Activated B cell treated with CpG ODN at 0.5 μM for 24 hours (primary cell): ENCODE measurements at regions of chr6 and their contacts with region 1.

Region 1: DNA sequence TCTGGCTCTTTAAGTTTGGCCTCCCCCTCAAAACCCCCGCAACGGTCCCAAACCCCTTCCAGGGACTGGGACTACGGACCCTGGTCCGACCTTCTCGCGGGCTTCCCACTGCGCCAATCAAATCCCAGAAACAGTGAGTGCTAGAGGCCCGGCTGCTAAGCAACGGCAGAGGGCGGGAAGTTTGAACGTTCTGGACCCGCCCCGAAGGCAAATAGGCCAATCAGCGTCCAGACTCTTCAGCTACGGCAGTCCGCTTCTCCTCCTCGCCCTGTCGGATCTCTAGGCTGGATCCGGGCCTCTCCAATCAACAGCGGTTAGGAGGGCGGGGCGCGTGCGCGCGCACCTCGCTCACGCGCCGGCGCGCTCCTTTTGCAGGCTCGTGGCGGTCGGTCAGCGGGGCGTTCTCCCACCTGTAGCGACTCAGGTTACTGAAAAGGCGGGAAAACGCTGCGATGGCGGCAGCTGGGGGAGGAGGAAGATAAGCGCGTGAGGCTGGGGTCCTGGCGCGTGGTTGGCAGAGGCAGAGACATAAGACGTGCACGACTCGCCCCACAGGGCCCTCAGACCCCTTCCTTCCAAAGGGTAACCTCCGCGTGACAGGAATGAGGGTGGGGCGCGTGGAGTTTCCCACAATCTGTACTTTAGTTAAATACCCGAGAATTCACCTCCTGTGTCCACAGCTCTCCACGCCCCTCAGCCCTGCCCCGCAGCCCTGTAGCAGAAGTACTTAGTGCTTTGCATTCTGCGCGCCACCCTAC is at the start of gene MSH5:
- DNase-seq: peak; percentile 90
- ATAC-seq: peak; percentile 80
- H3K4me3 Mint-ChIP-seq: peak within 1 kb of the TSS; percentile 93
- H3K27ac Mint-ChIP-seq: peak within 1 kb of the TSS; percentile 94
- H3K4me1 Mint-ChIP-seq: peaks cover 51% of the 10 kb centered on the region
- H3K27me3 Mint-ChIP-seq: no peaks in the 10 kb centered on the region
- CTCF ChIP-seq: no peak
- total RNA-seq, gene MSH5: 35.4 and 47.3 TPM in 2 replicates

Region 2: DNA sequence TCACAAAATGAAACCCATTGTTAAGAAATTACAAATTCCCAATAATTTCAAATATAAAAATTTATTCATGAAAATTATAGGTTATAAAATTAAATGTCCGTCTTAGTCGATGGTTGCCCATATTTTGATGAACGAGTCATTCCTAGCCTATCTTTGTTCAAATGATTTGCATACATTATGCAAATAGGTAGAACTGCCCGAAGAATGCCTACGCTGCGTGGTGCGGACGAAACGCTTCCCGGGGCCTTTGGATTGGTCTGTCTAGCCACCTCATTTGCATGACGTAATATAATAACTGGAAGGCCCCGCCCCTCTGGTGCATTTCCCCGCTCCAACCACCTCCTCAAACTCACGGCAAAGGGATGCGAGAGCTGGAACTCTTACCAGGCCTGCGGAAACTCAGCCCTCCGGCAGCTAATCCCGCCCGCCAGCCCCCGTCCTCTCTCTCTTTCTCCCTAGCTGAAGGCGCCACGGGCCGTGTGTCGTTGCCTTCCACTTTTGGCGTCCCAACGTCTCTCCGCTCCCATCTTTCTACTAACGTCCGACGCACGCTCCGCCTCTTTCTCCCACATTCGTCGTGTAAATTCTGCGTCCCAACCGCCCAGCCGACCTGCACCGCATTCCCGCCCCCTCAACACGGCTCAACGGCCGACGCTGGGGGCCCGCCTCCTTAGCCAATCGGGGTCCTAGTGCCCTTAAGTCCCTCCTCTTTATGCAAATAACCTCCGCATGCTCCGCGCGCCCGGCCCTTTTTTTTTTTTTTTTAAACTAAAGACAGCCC is 119.8 kb before region 1 on chr6:
- CTCF ChIA-PET with region 1: no interaction called
- POLR2A ChIA-PET with region 1: interaction called, 3 read pairs
- intact Hi-C with region 1: loop called (anchors 5 kb)
- DNase-seq: peak; percentile 87
- ATAC-seq: peak; percentile 84
- H3K4me3 Mint-ChIP-seq: peak overlapping the region; percentile 86
- H3K27ac Mint-ChIP-seq: peak overlapping the region; percentile 94
- H3K4me1 Mint-ChIP-seq: peaks cover 46% of the 10 kb centered on the region
- H3K27me3 Mint-ChIP-seq: no peaks in the 10 kb centered on the region
- CTCF ChIP-seq: no peak

Region 3: GRCh38 chr6:31729515-31729978 is 10.3 kb before region 1 on chr6:
- CTCF ChIA-PET with region 1: interaction called, 7 read pairs
- POLR2A ChIA-PET with region 1: interaction called, 131 read pairs
- intact Hi-C with region 1: loop called (anchors 1 kb)
- DNase-seq: peak; percentile 73
- ATAC-seq: peak; percentile 45
- H3K4me3 Mint-ChIP-seq: peak overlapping the region; percentile 97
- H3K27ac Mint-ChIP-seq: peak overlapping the region; percentile 92
- H3K4me1 Mint-ChIP-seq: peaks cover 71% of the 10 kb centered on the region
- H3K27me3 Mint-ChIP-seq: no peaks in the 10 kb centered on the region
- CTCF ChIP-seq: no peak

Region 4: GRCh38 chr6:31784098-31784925 is 44.5 kb after region 1 on chr6:
- CTCF ChIA-PET with region 1: no interaction called
- POLR2A ChIA-PET with region 1: interaction called, 43 read pairs
- intact Hi-C with region 1: loop called (anchors 1 kb)
- DNase-seq: no peak
- ATAC-seq: no peak
- H3K4me3 Mint-ChIP-seq: no peak overlapping the region
- H3K27ac Mint-ChIP-seq: no peak overlapping the region
- H3K4me1 Mint-ChIP-seq: peaks cover 12% of the 10 kb centered on the region
- H3K27me3 Mint-ChIP-seq: no peaks in the 10 kb centered on the region
- CTCF ChIP-seq: no peak

Region 5: DNA sequence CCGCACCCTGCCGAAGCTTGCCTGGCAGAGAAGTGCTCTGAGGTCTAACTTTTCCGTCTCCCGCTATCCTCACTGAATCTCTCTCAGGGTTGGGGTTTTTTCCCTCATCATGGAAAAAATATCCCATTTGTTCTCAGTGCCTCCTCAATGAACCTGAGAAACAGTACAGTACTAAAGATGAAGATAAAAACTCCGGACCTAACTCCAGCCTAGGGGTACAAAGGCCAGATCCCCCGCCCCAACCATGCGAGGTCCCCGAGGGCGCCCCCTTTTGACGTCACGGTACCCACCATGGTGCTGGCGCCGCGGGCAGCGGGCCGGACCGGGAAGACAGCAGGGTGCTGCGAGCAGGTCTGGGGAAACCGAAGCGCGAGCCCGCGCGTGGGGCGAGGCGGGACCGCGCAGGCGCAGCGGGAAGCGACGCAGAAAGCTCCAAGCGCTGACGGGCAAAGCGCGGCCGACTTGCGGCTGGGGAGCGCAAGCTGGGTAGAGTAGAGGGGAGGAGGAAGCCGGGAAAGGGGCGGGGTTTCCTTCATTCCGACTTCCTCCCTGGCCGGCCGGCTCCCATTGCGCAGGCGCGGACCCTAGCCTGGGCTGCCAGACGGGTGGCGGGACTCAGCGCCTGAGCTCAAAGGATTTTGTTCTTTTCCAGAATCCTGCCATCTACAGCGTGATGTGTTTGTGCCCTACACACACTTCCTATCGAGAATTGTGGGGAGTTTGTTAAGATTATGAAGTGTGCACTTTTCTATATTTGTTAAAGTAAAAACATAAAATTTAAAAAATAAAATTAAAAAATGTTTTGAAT is 66.9 kb after region 1 on chr6 and contains the start of gene LSM2:
- CTCF ChIA-PET with region 1: interaction called, 5 read pairs
- POLR2A ChIA-PET with region 1: interaction called, 55 read pairs
- intact Hi-C with region 1: no loop called
- DNase-seq: peak; percentile 89
- ATAC-seq: peak; percentile 98
- H3K4me3 Mint-ChIP-seq: peak within 1 kb of the TSS; percentile 94
- H3K27ac Mint-ChIP-seq: peak within 1 kb of the TSS; percentile 89
- H3K4me1 Mint-ChIP-seq: peaks cover 16% of the 10 kb centered on the region
- H3K27me3 Mint-ChIP-seq: no peaks in the 10 kb centered on the region
- CTCF ChIP-seq: no peak
- total RNA-seq, gene LSM2: 61.8 and 68.6 TPM in 2 replicates

Region 6: GRCh38 chr6:31834434-31835198 is 94.8 kb after region 1 on chr6:
- CTCF ChIA-PET with region 1: interaction called, 9 read pairs
- POLR2A ChIA-PET with region 1: interaction called, 48 read pairs
- intact Hi-C with region 1: no loop called
- DNase-seq: peak; percentile 75
- ATAC-seq: peak; percentile 62
- H3K4me3 Mint-ChIP-seq: peak overlapping the region; percentile 99
- H3K27ac Mint-ChIP-seq: peak overlapping the region; percentile 98
- H3K4me1 Mint-ChIP-seq: peaks cover 71% of the 10 kb centered on the region
- H3K27me3 Mint-ChIP-seq: no peaks in the 10 kb centered on the region
- CTCF ChIP-seq: no peak